HEK293 (cell line): ENCODE measurements at regions of chr17 and their contacts with region 1.

Region 1: GRCh38 chr17:74394977-74395376 is 27.7 kb downstream of the GPR142 start:
- H3K4me3 ChIP-seq: no peak overlapping the region
- H3K27ac ChIP-seq: no peak overlapping the region
- H3K4me1 ChIP-seq: no peaks in the 10 kb centered on the region
- CTCF ChIP-seq: no peak

Region 2: DNA sequence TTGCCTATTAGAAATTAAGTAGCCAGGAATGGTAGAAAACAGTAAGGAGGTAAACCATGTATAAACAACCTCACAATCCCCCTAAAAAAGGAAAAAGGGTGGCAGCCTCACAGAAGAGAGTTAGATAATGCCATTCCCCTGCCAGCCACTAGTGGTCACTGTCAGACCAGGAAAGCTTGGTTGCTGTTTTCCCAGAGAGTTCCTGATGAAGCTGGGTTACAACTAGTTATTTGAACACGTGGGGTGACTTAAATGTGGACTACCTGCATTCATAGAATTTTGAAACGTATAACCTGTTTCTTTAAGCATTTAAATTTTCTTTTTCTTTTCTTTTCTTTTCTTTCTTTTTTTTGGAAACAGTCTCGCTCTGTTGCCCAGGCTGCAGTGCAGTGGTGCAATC is 42.7 kb after region 1 on chr17:
- CTCF ChIA-PET with region 1: interaction called, 18 read pairs
- POLR2A ChIA-PET with region 1: no interaction called
- H3K4me3 ChIP-seq: no peak overlapping the region
- H3K27ac ChIP-seq: no peak overlapping the region
- H3K4me1 ChIP-seq: peaks cover 2% of the 10 kb centered on the region; the same call in 1 of the 2 replicates
- CTCF ChIP-seq: no peak